Gastrocnemius medialis (tissue), 4 donors: ENCODE measurements at regions of chr10 and their contacts with region 1.

Region 1: GRCh38 chr10:110724116-110724921 is 80.2 kb downstream of the RBM20 start:
- DNase-seq: no peak
- ATAC-seq: peak; percentile 2 to 3
- H3K4me3 ChIP-seq: no peak overlapping the region
- H3K27ac ChIP-seq: peak overlapping the region; percentile 85 to 94 (median 87)
- H3K4me1 ChIP-seq: peaks cover 44 to 47% of the 10 kb centered on the region in 2 donors
- H3K27me3 ChIP-seq: no peaks in the 10 kb centered on the region
- CTCF ChIP-seq: no peak
- POLR2A ChIP-seq: no peak

Region 2: GRCh38 chr10:110636932-110637557 is 87.3 kb before region 1 on chr10:
- in situ Hi-C with region 1: no loop called
- intact Hi-C with region 1: loop called (anchors 2 kb)
- DNase-seq: peak; percentile 54 to 93
- ATAC-seq: peak; percentile 55 to 77
- H3K4me3 ChIP-seq: no peak overlapping the region
- H3K27ac ChIP-seq: peak overlapping the region; percentile 83 to 91 (median 85)
- H3K4me1 ChIP-seq: peaks cover 36 to 55% of the 10 kb centered on the region in 2 donors
- H3K27me3 ChIP-seq: no peaks in the 10 kb centered on the region
- CTCF ChIP-seq: no peak
- POLR2A ChIP-seq: peak in 1 of 2 donors; percentile 7

Region 3: DNA sequence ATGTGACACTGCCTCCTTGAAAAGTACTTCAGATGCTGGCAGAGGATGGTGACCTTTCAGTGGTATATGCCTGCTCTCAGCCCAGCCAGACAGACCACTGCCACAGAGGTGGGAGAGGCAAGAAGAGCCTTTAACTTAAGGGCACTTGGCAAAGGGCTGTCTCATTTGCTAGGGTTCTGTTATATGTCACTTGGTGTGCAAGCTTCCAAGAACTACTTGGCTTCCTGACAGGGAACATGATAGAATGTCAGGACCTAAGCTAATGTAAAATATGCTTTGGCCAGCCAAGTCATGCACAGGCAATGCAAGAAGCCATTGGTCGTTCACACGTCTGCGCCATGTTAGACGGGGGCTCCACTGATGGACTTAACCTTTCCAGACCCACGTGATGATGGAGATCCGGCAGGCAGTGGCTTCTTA is 25.5 kb before region 1 on chr10:
- in situ Hi-C with region 1: no loop called
- intact Hi-C with region 1: loop called (anchors 1 kb)
- DNase-seq: peak; percentile 66 to 80
- ATAC-seq: peak; percentile 50 to 60
- H3K4me3 ChIP-seq: peak overlapping the region in 1 of 4 donors; percentile 9
- H3K27ac ChIP-seq: peak overlapping the region; percentile 86 to 94 (median 88)
- H3K4me1 ChIP-seq: peaks cover 64 to 77% of the 10 kb centered on the region in 2 donors
- H3K27me3 ChIP-seq: no peaks in the 10 kb centered on the region
- CTCF ChIP-seq: no peak
- POLR2A ChIP-seq: no peak

Region 4: DNA sequence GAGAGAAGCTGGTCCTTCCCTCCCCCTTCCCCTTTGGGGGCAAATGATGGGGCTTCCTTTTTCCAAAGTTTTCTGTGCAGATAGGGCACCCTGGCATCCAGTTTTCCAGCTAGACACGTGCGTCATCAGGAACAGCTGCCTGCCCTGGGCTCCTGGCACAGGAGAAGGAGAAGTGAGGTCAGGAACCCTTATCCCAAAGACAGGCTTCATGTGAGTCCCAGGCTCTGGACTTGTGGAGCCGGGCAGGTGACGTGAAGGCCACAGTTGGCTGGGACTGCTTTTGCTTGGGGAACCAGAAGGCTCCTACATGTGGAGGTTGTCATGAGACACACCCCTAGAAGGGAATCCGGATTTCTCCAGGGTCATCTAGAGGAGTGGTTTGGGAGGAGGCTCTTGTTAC is 13.7 kb before region 1 on chr10:
- in situ Hi-C with region 1: no loop called
- intact Hi-C with region 1: loop called (anchors 1 kb)
- DNase-seq: no peak
- ATAC-seq: peak; percentile 16 to 23
- H3K4me3 ChIP-seq: no peak overlapping the region
- H3K27ac ChIP-seq: peak overlapping the region; percentile 64 to 83 (median 82)
- H3K4me1 ChIP-seq: peaks cover 38 to 47% of the 10 kb centered on the region in 2 donors
- H3K27me3 ChIP-seq: no peaks in the 10 kb centered on the region
- CTCF ChIP-seq: no peak
- POLR2A ChIP-seq: no peak